Gastrocnemius medialis (tissue), 4 donors: ENCODE measurements at regions of chr6 and their contacts with region 1.

Region 1: GRCh38 chr6:127266178-127266891 is at the start of gene RNF146:
- DNase-seq: peak; percentile 75 to 78
- ATAC-seq: peak; percentile 84 to 87
- H3K4me3 ChIP-seq: peak within 1 kb of the TSS; percentile 74 to 90 (median 84)
- H3K27ac ChIP-seq: peak within 1 kb of the TSS; percentile 95 to 99 (median 96)
- H3K4me1 ChIP-seq: peaks cover 32 to 33% of the 10 kb centered on the region in 2 donors
- H3K27me3 ChIP-seq: no peaks in the 10 kb centered on the region
- CTCF ChIP-seq: peak; percentile 75 to 83 (median 80)
- POLR2A ChIP-seq: no peak
- total RNA-seq, gene RNF146: 36.3 to 82.3 (median 56.8) TPM

Region 2: GRCh38 chr6:126804332-126805064 is 461.8 kb before region 1 on chr6:
- in situ Hi-C with region 1: loop called in 1 of 4 experiments (anchors 10 kb)
- intact Hi-C with region 1: loop called (anchors 1 kb)
- DNase-seq: peak in 1 of 2 donors; percentile 4
- ATAC-seq: peak; percentile 66 to 87
- H3K4me3 ChIP-seq: no peak overlapping the region
- H3K27ac ChIP-seq: no peak overlapping the region
- H3K4me1 ChIP-seq: peaks cover 0 to 3% of the 10 kb centered on the region in 2 donors
- H3K27me3 ChIP-seq: no peaks in the 10 kb centered on the region
- CTCF ChIP-seq: peak; percentile 39 to 79 (median 62)
- POLR2A ChIP-seq: no peak

Region 3: GRCh38 chr6:127120787-127121636 is 145.3 kb before region 1 on chr6:
- in situ Hi-C with region 1: no loop called
- intact Hi-C with region 1: loop called (anchors 5 kb)
- DNase-seq: peak; percentile 73 to 79
- ATAC-seq: peak; percentile 62 to 85
- H3K4me3 ChIP-seq: peak overlapping the region; percentile 66 to 72 (median 68)
- H3K27ac ChIP-seq: peak overlapping the region; percentile 83 to 94 (median 86)
- H3K4me1 ChIP-seq: peaks cover 41 to 42% of the 10 kb centered on the region in 2 donors
- H3K27me3 ChIP-seq: peaks cover 0 to 9% (median 0%) of the 10 kb centered on the region in 3 donors
- CTCF ChIP-seq: peak; percentile 57 to 85 (median 72)
- POLR2A ChIP-seq: no peak

Region 4: GRCh38 chr6:127186889-127187288 is 79.4 kb before region 1 on chr6:
- in situ Hi-C with region 1: loop called in 2 of 4 experiments (anchors 10 kb)
- intact Hi-C with region 1: loop called (anchors 2 kb)
- DNase-seq: peak; percentile 6 to 58
- ATAC-seq: no peak
- H3K4me3 ChIP-seq: no peak overlapping the region
- H3K27ac ChIP-seq: peak overlapping the region in 2 of 4 donors; percentile 74 to 78
- H3K4me1 ChIP-seq: peaks cover 26 to 29% of the 10 kb centered on the region in 2 donors
- H3K27me3 ChIP-seq: no peaks in the 10 kb centered on the region
- CTCF ChIP-seq: peak; percentile 15 to 45 (median 22)
- POLR2A ChIP-seq: no peak

Region 5: GRCh38 chr6:127198549-127198948 is 67.8 kb before region 1 on chr6:
- in situ Hi-C with region 1: loop called in 3 of 4 experiments (anchors 5 to 10 kb)
- intact Hi-C with region 1: loop called (anchors 2 kb)
- DNase-seq: no peak
- ATAC-seq: peak; percentile 75 to 92
- H3K4me3 ChIP-seq: no peak overlapping the region
- H3K27ac ChIP-seq: peak overlapping the region; percentile 42 to 54 (median 49)
- H3K4me1 ChIP-seq: peaks cover 0 to 2% of the 10 kb centered on the region in 2 donors
- H3K27me3 ChIP-seq: no peaks in the 10 kb centered on the region
- CTCF ChIP-seq: no peak
- POLR2A ChIP-seq: no peak

Region 6: DNA sequence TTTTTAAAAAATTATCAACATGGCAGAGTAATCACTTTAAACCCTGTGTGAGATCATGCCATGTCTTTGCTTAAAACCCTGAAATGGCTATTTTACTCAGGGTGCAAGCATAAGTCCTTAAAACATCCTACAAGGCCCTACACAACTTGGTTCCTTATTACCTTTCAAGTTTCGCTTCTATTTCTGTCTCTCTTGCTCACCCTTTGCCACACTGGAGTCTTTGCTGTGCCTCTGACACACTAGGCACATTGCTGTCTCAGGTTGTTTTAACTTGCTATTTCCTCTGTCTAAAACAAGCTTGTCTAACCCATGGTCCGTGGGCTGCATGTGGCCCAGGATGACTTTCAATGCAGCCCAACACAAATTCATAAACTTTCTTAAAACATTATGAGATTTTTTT is 137.3 kb after region 1 on chr6:
- in situ Hi-C with region 1: no loop called
- intact Hi-C with region 1: no loop called
- DNase-seq: no peak
- ATAC-seq: peak; percentile 47 to 87
- H3K4me3 ChIP-seq: no peak overlapping the region
- H3K27ac ChIP-seq: no peak overlapping the region
- H3K4me1 ChIP-seq: peaks cover 3 to 6% of the 10 kb centered on the region in 2 donors
- H3K27me3 ChIP-seq: no peaks in the 10 kb centered on the region
- CTCF ChIP-seq: no peak
- POLR2A ChIP-seq: no peak

Region 7: DNA sequence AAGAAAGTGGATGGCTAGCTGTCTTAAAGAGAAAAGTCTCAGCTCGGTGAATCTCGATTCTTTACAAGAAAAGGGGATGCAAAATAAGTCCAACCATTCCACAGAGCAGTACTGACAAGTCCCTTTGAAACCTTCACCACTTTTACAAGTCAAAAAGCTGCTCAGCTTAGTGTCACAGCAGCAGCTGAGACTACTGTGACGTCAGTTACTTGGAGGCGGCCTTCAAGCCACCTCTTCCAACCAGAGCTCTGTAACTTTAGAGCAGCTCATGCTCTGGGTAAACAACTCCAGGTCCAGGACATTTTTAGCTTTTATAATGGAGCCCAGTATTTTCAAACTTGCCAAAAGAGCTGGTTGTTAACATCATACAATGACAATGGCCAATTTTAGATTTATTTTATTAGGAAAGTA is 192.9 kb after region 1 on chr6 and contains the start of gene KIAA0408:
- in situ Hi-C with region 1: no loop called
- intact Hi-C with region 1: loop called (anchors 2 kb)
- DNase-seq: peak; percentile 87 to 88
- ATAC-seq: peak; percentile 92 to 93
- H3K4me3 ChIP-seq: peak within 1 kb of the TSS; percentile 48 to 76 (median 61)
- H3K27ac ChIP-seq: peak within 1 kb of the TSS; percentile 88 to 94 (median 91)
- H3K4me1 ChIP-seq: peaks cover 55 to 74% of the 10 kb centered on the region in 2 donors
- H3K27me3 ChIP-seq: no peaks in the 10 kb centered on the region
- CTCF ChIP-seq: no peak
- POLR2A ChIP-seq: peak; percentile 35 to 93
- total RNA-seq, gene KIAA0408: 34.0 to 57.4 (median 44.8) TPM